ENCODE measurements at regions of chr5 and their contacts with region 1.

Region 1: GRCh38 chr5:69007726-69008368 is 86.0 kb upstream of the SLC30A5 start:
- DNase-seq: peak; percentile 61
- CTCF ChIP-seq: peak; percentile 95

Region 2: DNA sequence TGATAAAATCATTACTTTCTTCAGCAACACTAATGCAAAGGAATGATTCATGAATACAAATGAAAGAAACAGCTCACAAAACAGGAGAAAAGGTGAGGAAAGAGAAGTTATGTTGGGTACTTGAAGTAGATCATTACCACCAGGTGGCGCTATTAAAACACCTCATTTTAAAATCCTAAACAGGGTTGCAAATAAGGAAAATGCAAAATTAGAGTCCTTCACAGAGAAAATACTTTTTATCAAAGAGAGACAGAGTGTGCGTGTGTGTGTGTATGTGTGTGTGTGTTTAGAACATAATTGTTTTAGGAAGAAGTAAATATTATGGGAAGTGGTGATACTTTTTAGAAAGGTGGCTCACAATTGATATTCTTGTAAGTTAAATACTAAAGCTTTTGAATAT is 1761.7 kb before region 1 on chr5:
- in situ Hi-C with region 1: loop called (anchors 25 kb)
- DNase-seq: peak; percentile 34
- CTCF ChIP-seq: peak; percentile 39

Region 3: GRCh38 chr5:68287976-68288706 is 719.7 kb before region 1 on chr5:
- in situ Hi-C with region 1: loop called (anchors 25 kb)
- DNase-seq: peak; percentile 75
- CTCF ChIP-seq: no peak

Region 4: GRCh38 chr5:68460147-68460798 is 547.6 kb before region 1 on chr5:
- in situ Hi-C with region 1: loop called (anchors 25 kb)
- DNase-seq: peak; percentile 38
- CTCF ChIP-seq: peak; percentile 47

Region 5: GRCh38 chr5:68628082-68628814 is 379.6 kb before region 1 on chr5:
- in situ Hi-C with region 1: no loop called
- DNase-seq: no peak
- CTCF ChIP-seq: no peak

Region 6: GRCh38 chr5:68661237-68661636 is 346.6 kb before region 1 on chr5:
- in situ Hi-C with region 1: loop called (anchors 25 kb)
- DNase-seq: peak; percentile 31
- CTCF ChIP-seq: peak; percentile 16

Region 7: GRCh38 chr5:68862560-68862959 is 145.3 kb before region 1 on chr5:
- in situ Hi-C with region 1: no loop called
- DNase-seq: no peak
- CTCF ChIP-seq: no peak

Measured in GM13976 (cell line).